ENCODE measurements at regions of chr5 and their contacts with region 1.

Region 1: DNA sequence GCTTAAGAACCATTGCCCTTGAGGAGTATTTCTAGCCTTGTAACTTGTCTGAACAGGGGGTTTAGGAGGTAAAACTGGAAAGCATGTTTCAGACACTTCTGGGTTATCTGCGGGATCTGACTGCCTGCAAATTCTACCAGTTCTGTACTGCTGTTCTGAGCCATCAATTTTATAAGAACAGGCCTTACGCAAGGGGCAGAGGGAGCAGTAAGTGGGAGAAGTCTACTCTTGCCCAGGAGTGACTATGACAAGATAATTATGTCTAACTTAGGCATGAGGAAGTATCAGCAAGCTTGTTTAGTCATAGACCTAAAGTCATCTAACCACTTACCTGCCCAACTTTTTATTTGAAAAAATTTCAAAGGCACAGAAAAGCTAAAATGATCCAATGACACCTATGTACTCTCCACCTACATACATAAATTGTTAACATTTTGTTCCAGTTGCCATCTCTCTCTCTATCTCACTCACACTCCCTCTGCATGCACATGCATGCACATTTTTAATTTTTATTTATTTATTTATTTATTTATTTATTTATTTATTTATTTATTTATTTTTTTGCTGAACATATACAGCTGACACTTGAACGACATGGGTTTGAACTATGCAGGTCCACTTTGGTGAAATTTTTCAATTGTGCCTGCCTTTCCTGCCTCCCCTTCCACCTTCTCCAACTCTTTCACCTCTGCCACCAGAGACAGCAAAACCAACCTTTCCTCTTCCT is 18.4 kb upstream of the DEPDC1B start:
- DNase-seq: no peak
- ATAC-seq: no peak
- H3K4me3 ChIP-seq: no peak overlapping the region
- H3K27ac ChIP-seq: no peak overlapping the region
- H3K4me1 ChIP-seq: no peaks in the 10 kb centered on the region
- H3K27me3 ChIP-seq: peaks cover 0 to 3% of the 10 kb centered on the region in 2 experiments; a peak in 2 of 5 replicates
- CTCF ChIP-seq: no peak
- EP300 ChIP-seq: no peak
- POLR2A ChIP-seq: no peak
- RAD21 ChIP-seq: no peak

Region 2: DNA sequence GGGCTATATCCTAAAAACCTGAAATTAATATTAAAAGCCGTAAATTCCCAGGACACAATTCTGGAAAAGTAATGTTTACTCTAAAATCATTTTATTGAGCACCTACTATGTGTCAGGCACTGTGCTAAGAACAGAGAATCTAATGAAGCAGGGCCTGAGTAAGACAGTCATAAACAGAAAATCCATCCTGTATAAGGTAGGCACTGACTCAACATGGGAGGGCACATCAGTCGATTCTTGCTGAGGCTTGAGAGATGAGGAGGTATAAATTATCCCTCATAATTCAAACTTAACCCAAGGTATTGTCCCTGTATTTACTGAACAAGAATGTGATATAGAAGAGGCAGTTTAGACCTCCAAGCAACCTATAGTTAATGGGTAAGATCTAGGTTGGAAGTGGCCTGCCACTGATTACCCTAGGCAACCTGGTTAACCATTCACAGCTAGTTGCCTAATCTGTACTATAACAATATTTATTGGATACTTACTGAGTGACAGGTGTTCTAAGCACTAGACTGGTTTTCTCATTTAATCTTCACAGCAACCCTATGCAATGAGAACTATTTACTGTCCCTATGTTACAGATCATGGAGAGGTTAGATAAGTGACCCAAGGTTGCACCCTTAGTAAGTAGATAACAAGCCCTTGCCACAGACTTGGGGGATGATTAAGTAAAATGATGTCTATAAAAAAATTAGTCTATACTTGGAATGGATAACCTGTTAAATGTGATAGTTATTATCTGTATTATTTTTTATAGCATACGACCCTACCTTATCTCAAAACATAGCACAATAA is 1142.5 kb before region 1 on chr5:
- CTCF ChIA-PET with region 1: no interaction called
- POLR2A ChIA-PET with region 1: no interaction called
- in situ Hi-C with region 1: no loop called
- intact Hi-C with region 1: no loop called
- DNase-seq: no peak
- ATAC-seq: no peak
- H3K4me3 ChIP-seq: no peak overlapping the region
- H3K27ac ChIP-seq: no peak overlapping the region
- H3K4me1 ChIP-seq: 0 out of 2 replicates have a peak, but pooled peaks cover 8% of the 10 kb centered on the region
- H3K27me3 ChIP-seq: no peaks in the 10 kb centered on the region
- CTCF ChIP-seq: no peak
- EP300 ChIP-seq: no peak
- POLR2A ChIP-seq: no peak
- RAD21 ChIP-seq: no peak

Region 3: GRCh38 chr5:60447488-60447920 is 270.8 kb before region 1 on chr5:
- CTCF ChIA-PET with region 1: no interaction called
- POLR2A ChIA-PET with region 1: no interaction called
- in situ Hi-C with region 1: no loop called
- intact Hi-C with region 1: no loop called
- DNase-seq: peak; percentile 98
- ATAC-seq: peak; percentile 99
- H3K4me3 ChIP-seq: peak overlapping the region in 1 of 3 experiments; percentile 24; a peak in 1 of 6 replicates
- H3K27ac ChIP-seq: peak overlapping the region; percentile 69
- H3K4me1 ChIP-seq: peaks cover 83% of the 10 kb centered on the region
- H3K27me3 ChIP-seq: no peaks in the 10 kb centered on the region
- CTCF ChIP-seq: no peak; the same call in 1 of the 2 replicates
- EP300 ChIP-seq: peak in 1 of 2 experiments; percentile 99; a peak in 2 of 4 replicates
- POLR2A ChIP-seq: no peak; a peak in 1 of 4 replicates
- RAD21 ChIP-seq: no peak

Region 4: GRCh38 chr5:60738461-60738860 is 20.1 kb after region 1 on chr5:
- CTCF ChIA-PET with region 1: no interaction called
- POLR2A ChIA-PET with region 1: no interaction called
- in situ Hi-C with region 1: no loop called
- intact Hi-C with region 1: loop called (anchors 1 kb)
- DNase-seq: no peak
- ATAC-seq: peak; percentile 51
- H3K4me3 ChIP-seq: no peak overlapping the region
- H3K27ac ChIP-seq: no peak overlapping the region
- H3K4me1 ChIP-seq: no peaks in the 10 kb centered on the region
- H3K27me3 ChIP-seq: no peaks in the 10 kb centered on the region; a peak in 1 of 5 replicates
- CTCF ChIP-seq: no peak
- EP300 ChIP-seq: no peak
- POLR2A ChIP-seq: no peak
- RAD21 ChIP-seq: no peak

Region 5: GRCh38 chr5:61177716-61178115 is 459.4 kb after region 1 on chr5:
- CTCF ChIA-PET with region 1: no interaction called
- POLR2A ChIA-PET with region 1: no interaction called
- in situ Hi-C with region 1: no loop called
- intact Hi-C with region 1: no loop called
- DNase-seq: no peak
- ATAC-seq: no peak
- H3K4me3 ChIP-seq: no peak overlapping the region
- H3K27ac ChIP-seq: no peak overlapping the region
- H3K4me1 ChIP-seq: no peaks in the 10 kb centered on the region
- H3K27me3 ChIP-seq: no peaks in the 10 kb centered on the region; a peak in 1 of 5 replicates
- CTCF ChIP-seq: no peak
- EP300 ChIP-seq: no peak
- POLR2A ChIP-seq: no peak
- RAD21 ChIP-seq: no peak

Measured in HepG2 (cell line).